ENCODE measurements at regions of chr17 and their contacts with region 1.

Region 1: DNA sequence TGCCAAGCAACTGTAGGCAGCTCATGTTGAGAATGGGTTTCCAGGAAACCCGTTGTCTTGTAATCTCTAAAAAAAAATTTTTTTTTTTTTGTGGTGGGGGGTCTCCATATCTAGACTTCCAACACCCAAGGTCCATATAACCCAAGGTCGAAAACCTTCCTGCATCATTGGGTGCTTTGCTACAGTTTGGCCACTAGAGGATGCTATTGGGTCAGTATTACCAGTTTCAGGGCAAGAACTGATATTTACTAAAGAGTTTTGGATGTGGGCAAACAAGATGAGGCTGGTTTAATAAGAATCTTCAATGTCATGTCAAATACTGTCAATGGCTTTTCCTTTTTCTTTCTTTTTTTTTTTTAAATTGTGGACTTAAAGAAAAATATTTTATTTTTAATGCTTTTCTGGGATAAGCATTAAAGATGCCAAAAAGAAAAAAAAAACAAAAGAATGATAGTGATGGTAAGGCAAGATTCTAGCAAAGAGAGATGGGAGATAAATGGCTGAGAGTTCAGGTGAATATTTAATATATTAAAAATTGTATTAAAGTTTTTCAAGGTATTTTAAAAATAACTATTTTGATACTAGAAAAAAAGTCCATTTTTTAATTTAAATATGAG is 62.2 kb downstream of the DHRS7C start:
- DNase-seq: peak; percentile 9
- ATAC-seq: peak; percentile 58
- H3K4me3 Mint-ChIP-seq: no peak overlapping the region
- H3K27ac Mint-ChIP-seq: no peak overlapping the region
- H3K4me1 Mint-ChIP-seq: no peaks in the 10 kb centered on the region
- H3K27me3 Mint-ChIP-seq: peaks cover 2% of the 10 kb centered on the region
- CTCF ChIP-seq: peak; percentile 96

Region 2: GRCh38 chr17:9676742-9677387 is 52.3 kb before region 1 on chr17:
- CTCF ChIA-PET with region 1: no interaction called
- POLR2A ChIA-PET with region 1: no interaction called
- intact Hi-C with region 1: no loop called
- DNase-seq: peak; percentile 4
- ATAC-seq: peak; percentile 62
- H3K4me3 Mint-ChIP-seq: no peak overlapping the region
- H3K27ac Mint-ChIP-seq: no peak overlapping the region
- H3K4me1 Mint-ChIP-seq: no peaks in the 10 kb centered on the region
- H3K27me3 Mint-ChIP-seq: peaks cover 2% of the 10 kb centered on the region
- CTCF ChIP-seq: no peak

Region 3: DNA sequence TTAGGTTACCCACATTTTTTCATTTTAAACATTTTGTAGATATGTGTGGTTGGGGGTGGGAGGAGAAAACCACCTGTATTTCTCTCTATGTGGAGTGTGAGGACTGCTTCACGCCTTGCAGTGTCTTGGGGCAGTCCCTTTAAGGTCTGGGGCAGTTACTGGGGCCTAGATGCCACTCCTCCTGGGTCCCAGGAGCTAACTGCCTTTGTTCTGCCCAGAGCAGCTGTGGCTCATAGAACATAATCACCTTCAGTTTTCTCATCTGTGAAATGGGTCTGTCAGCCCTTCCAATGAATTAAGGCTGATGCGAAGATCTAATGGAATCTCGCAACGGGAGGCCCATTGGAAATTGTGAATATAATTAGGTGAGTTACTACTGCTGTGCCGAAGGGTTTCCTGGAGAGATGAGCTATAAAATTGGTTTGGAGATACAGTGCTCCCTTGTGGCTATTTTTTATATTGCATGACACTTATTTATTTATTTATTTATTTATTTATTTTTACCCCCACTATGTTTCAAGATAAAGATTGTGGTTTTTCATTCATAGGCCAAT is 39.3 kb after region 1 on chr17:
- CTCF ChIA-PET with region 1: interaction called, 14 read pairs
- POLR2A ChIA-PET with region 1: no interaction called
- intact Hi-C with region 1: loop called (anchors 5 kb)
- DNase-seq: no peak
- ATAC-seq: peak; percentile 45
- H3K4me3 Mint-ChIP-seq: no peak overlapping the region
- H3K27ac Mint-ChIP-seq: no peak overlapping the region
- H3K4me1 Mint-ChIP-seq: no peaks in the 10 kb centered on the region
- H3K27me3 Mint-ChIP-seq: peaks cover 3% of the 10 kb centered on the region
- CTCF ChIP-seq: peak; percentile 72

Region 4: DNA sequence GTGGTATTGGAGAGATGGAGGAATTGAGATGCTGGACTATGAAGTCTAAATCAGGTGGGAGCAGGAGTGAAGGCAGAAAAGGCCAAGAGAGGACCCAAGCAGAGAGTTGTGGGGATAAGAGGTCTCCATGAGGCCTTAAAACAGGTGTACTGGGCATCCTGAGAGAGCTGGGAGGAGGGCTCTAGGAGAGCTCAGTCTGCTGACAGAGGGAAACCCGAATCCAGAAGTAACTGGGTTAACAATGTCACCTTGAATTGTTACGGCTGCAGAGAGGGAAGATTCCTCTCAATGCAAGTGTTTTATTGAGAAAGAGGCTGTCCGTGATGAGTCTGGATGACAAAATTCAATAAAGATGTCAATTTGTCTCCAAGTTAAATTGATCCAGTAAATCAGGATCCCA is 53.9 kb after region 1 on chr17:
- CTCF ChIA-PET with region 1: no interaction called
- POLR2A ChIA-PET with region 1: no interaction called
- intact Hi-C with region 1: no loop called
- DNase-seq: no peak
- ATAC-seq: no peak
- H3K4me3 Mint-ChIP-seq: no peak overlapping the region
- H3K27ac Mint-ChIP-seq: no peak overlapping the region
- H3K4me1 Mint-ChIP-seq: no peaks in the 10 kb centered on the region
- H3K27me3 Mint-ChIP-seq: peaks cover 10% of the 10 kb centered on the region
- CTCF ChIP-seq: no peak

Region 5: DNA sequence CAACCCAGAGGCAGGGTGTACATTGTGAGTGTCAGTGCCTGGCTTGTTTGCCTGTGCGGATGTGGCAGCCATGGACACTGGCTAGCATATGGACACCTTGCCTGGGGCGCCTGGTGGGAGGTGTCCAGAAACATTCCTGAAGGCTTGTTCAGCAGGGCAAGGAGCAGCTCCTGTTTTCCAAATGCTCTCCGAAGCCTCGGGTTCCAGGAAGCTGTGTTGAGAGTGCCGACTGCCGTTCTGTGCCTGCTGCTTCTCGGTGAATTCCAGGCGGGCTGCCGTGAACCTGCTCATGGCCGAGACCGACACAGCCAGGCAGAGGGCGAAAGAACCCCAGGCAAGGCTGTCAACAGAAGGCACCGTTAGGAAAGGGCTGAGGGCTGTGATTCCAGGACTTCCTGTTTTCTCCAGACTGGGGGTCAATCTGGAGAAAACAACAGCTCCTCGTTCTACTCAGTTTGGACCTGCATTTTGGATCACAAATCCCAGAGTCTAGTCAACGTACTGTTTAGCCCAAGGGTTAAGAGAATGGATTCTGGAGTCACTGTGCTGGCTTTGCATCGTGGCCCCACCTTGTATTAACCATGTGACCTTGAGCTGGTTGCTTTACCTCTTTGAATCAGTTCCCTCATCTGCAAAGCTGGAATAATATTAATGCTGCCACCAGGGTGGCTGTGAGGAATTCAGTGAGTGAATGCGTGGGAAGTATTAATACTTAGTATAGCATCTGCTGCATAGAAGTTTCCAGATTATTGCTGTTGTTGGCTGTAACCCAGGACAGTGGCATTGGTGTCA is 73.4 kb after region 1 on chr17:
- CTCF ChIA-PET with region 1: no interaction called
- POLR2A ChIA-PET with region 1: no interaction called
- intact Hi-C with region 1: no loop called
- DNase-seq: no peak
- ATAC-seq: no peak
- H3K4me3 Mint-ChIP-seq: no peak overlapping the region
- H3K27ac Mint-ChIP-seq: no peak overlapping the region
- H3K4me1 Mint-ChIP-seq: no peaks in the 10 kb centered on the region
- H3K27me3 Mint-ChIP-seq: peaks cover 19% of the 10 kb centered on the region
- CTCF ChIP-seq: no peak

Measured in activated CD8-positive, alpha-beta T cell treated with anti-CD3 and anti-CD28 coated beads for 36 hours (primary cell).